Lower leg skin (tissue), 4 donors: ENCODE measurements at regions of chr19 and their contacts with region 1.

Region 1: DNA sequence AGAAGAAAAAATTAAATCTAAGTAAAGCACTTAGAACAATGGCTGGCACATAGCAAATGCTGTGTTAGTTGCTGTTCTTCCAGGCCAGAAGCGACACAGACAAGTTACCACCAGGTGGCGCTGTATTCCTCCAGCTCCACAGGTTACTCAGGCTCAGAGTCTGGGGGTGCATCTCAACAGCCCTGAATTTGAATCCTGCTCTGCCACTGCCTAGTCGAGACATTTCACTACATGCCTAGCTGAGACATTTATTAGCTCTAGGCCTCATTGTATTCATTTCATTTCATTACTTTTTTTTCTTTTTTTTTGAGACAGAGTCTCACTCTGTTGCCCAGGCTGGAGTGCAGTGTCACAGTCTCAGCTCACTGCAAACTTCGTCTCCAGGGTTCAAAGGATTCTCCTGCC is 16.4 kb upstream of the CYP2B6 start:
- DNase-seq: peak; percentile 61 to 89
- H3K4me3 ChIP-seq: no peak overlapping the region
- CTCF ChIP-seq: no peak
- POLR2A ChIP-seq: no peak

Region 2: DNA sequence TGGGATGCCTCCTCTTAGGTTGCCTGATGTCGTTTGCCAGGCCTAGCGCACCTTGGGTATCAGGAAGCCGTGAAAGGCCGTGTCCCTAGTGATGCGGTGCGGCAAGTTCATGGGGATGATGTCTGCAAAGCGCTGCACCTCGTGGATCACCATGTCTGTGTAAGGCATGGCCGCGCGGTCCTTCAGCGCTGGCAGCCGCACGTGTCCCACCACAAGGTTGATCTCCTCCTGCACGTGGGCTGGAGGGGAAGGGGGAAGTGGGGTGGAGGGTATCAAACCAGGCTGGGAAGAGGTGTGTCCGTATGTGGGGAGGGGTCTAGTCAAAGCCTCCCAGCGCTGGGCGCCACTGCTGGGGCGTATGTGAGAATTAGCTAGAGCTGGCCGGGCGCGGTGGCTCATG is 152.5 kb before region 1 on chr19:
- intact Hi-C with region 1: no loop called
- DNase-seq: peak in 1 of 2 donors; percentile 77
- H3K4me3 ChIP-seq: no peak overlapping the region
- CTCF ChIP-seq: no peak
- POLR2A ChIP-seq: no peak

Region 3: DNA sequence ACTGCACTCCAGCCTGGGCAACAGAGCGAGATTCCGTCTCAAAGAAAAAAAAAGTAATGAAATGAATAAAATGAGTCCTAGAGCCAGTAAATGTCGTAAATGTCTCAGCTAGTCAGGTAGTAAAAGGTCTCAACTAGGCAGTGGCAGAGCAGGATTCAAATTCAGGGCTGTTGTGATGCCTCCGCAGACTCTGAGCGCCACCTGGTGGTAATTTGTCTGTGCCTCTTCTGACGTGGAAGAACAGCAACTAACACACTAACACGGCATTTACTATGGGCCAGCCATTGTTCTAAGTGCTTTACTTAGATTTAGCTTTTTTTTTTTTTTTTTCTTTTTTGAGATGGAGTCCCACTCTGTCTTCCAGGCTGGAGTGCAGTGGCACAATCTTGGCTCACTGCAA is 169.8 kb after region 1 on chr19:
- intact Hi-C with region 1: loop called (anchors 10 kb)
- DNase-seq: peak; percentile 85 to 93
- H3K4me3 ChIP-seq: no peak overlapping the region
- CTCF ChIP-seq: peak in 1 of 3 donors; percentile 79
- POLR2A ChIP-seq: no peak